ENCODE measurements at regions of chr4 and their contacts with region 1.

Region 1: DNA sequence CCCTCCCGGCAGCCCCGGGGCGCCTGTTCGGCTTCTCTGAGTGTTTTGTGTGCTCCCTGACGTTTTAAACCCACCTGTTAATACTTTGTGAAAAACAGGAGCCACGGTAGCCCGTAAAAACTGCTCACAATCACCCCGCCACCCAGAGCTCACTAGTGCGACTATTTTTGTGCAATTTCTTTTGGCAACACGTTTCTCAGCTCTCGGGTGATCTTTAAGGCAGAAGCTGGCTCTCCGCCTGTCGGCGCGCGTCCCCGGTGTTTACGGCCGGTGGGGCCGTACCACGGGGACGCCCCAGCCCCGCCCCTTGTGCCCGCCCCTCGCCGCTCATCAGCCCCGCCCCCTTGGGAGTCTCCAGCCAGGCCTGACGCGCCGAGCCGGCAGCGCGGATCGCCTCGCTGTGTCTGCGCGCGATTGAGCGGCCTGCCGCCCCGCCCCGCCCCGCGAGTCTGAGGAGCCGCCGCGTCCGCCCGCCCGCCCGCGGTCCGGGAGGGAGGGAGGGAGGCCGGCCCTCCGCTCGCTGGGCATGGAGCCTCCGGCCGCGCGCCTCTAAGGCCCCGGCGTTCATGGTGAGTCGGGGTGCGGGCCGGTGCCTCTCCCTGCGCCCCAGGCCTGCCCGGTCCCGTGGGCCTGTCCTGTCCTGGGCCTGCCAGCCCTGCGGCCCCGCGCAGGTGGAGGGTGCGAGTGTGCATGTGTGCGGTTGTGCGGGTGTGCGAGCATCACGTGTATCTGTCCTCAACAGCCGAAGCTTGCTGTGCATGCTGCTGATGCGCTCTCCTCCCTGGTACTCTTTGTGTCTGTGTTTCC is 56.2 kb upstream of the TADA2B start:
- DNase-seq: peak; percentile 94
- H3K4me3 Mint-ChIP-seq: peak overlapping the region; percentile 100
- H3K27ac Mint-ChIP-seq: peak overlapping the region; percentile 94
- H3K4me1 Mint-ChIP-seq: peaks cover 83% of the 10 kb centered on the region
- H3K27me3 Mint-ChIP-seq: no peaks in the 10 kb centered on the region

Region 2: DNA sequence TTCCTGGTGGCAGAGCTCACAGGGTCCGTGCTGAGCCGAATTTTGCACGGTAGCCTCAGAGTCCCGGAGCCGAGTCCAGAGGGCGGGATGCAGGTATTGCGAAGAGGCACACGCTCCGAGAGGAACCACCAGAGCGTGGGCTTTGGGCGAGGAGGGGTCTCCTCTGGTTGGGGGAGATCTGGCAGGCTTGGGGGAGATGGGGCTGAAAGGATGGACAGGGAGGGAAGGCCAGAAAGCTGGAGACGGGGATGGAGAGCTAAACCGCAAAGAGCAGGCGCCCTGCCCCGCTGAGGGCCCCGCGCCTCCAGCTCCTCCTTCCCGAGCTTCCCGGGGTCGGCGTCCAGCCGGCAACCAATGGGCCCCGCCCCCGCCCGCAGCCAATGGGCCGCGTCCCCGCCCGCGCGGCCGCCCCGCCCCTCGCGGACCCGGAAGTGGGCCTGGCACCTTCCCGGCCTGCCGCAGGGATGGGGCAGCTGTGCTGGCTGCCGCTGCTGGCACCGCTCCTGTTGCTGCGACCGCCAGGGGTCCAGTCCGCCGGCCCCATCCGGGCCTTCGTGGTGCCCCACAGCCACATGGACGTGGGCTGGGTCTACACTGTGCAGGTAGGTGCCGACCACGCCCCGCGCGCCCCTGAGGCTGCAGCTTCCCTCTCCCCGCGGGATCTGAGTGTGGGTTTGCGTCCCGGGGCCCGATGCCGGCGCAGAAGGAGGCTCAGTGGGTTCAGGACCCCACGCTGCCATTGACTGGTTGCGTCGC is 412.1 kb before region 1 on chr4 and contains the start of gene MAN2B2:
- intact Hi-C with region 1: loop called (anchors 2 kb)
- DNase-seq: peak; percentile 83
- H3K4me3 Mint-ChIP-seq: peak within 1 kb of the TSS; percentile 87
- H3K27ac Mint-ChIP-seq: peak within 1 kb of the TSS; percentile 71
- H3K4me1 Mint-ChIP-seq: no peaks in the 10 kb centered on the region
- H3K27me3 Mint-ChIP-seq: peaks cover 5% of the 10 kb centered on the region
- total RNA-seq, gene MAN2B2: 13.9 and 14.0 TPM in 2 replicates

Region 3: GRCh38 chr4:6709230-6710114 is 277.5 kb before region 1 on chr4 and contains the start of gene MRFAP1L1:
- intact Hi-C with region 1: loop called (anchors 2 kb)
- DNase-seq: peak; percentile 95
- H3K4me3 Mint-ChIP-seq: peak within 1 kb of the TSS; percentile 98
- H3K27ac Mint-ChIP-seq: peak within 1 kb of the TSS; percentile 95
- H3K4me1 Mint-ChIP-seq: peaks cover 62% of the 10 kb centered on the region
- H3K27me3 Mint-ChIP-seq: peaks cover 3% of the 10 kb centered on the region
- total RNA-seq, gene MRFAP1L1: 51.7 and 53.9 TPM in 2 replicates

Region 4: GRCh38 chr4:6909073-6909965 is 77.7 kb before region 1 on chr4 and contains the start of gene TBC1D14:
- intact Hi-C with region 1: loop called (anchors 1 kb)
- DNase-seq: peak; percentile 82
- H3K4me3 Mint-ChIP-seq: peak within 1 kb of the TSS; percentile 95
- H3K27ac Mint-ChIP-seq: peak within 1 kb of the TSS; percentile 94
- H3K4me1 Mint-ChIP-seq: peaks cover 66% of the 10 kb centered on the region
- H3K27me3 Mint-ChIP-seq: no peaks in the 10 kb centered on the region
- total RNA-seq, gene TBC1D14: 58.1 and 59.7 TPM in 2 replicates

Region 5: DNA sequence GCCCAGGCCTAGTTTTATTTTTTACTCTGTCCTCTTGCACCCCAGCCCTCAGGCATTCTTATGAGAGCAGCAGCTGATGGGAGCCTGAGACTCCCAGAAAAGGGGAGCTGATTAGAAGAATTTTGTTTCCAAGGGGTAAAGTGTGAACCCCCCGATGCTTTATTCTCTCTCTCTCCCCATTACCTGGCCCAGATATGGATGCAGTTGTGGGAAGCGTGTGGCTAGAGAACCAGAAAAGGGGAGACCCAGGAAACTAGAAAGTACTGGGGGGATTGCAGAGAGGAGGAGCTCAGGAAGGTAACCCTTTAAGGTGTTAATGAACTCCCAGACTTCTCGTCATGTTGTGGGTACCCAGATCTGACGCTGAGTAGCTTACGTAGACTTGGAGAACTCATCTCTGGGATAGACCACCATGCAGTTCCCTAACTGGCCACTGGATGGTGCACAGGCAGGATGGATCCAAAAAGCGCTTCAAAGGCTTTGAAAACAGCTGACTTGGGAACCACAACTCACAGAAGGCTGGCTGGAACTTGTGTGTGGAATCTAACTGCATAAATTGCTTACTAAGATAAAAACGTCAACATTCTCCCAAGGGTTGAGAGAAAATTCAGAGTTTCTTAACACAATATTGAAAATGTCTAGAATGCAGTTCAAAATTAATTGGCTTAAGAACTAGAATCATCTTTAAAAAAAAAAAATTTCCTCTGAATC is 12.7 kb before region 1 on chr4:
- intact Hi-C with region 1: loop called (anchors 1 kb)
- DNase-seq: peak; percentile 70
- H3K4me3 Mint-ChIP-seq: no peak overlapping the region
- H3K27ac Mint-ChIP-seq: no peak overlapping the region
- H3K4me1 Mint-ChIP-seq: peaks cover 13% of the 10 kb centered on the region
- H3K27me3 Mint-ChIP-seq: no peaks in the 10 kb centered on the region

Region 6: GRCh38 chr4:7067452-7068278 is 80.7 kb after region 1 on chr4 and contains the start of gene GRPEL1:
- intact Hi-C with region 1: loop called (anchors 1 kb)
- DNase-seq: peak; percentile 100
- H3K4me3 Mint-ChIP-seq: peak within 1 kb of the TSS; percentile 94
- H3K27ac Mint-ChIP-seq: peak within 1 kb of the TSS; percentile 94
- H3K4me1 Mint-ChIP-seq: peaks cover 50% of the 10 kb centered on the region
- H3K27me3 Mint-ChIP-seq: peaks cover 16% of the 10 kb centered on the region
- total RNA-seq, gene GRPEL1: 106 and 115 TPM in 2 replicates

Region 7: GRCh38 chr4:7094916-7095315 is 107.9 kb after region 1 on chr4:
- intact Hi-C with region 1: no loop called
- DNase-seq: no peak
- H3K4me3 Mint-ChIP-seq: no peak overlapping the region
- H3K27ac Mint-ChIP-seq: no peak overlapping the region
- H3K4me1 Mint-ChIP-seq: no peaks in the 10 kb centered on the region
- H3K27me3 Mint-ChIP-seq: peaks cover 25% of the 10 kb centered on the region

Region 8: DNA sequence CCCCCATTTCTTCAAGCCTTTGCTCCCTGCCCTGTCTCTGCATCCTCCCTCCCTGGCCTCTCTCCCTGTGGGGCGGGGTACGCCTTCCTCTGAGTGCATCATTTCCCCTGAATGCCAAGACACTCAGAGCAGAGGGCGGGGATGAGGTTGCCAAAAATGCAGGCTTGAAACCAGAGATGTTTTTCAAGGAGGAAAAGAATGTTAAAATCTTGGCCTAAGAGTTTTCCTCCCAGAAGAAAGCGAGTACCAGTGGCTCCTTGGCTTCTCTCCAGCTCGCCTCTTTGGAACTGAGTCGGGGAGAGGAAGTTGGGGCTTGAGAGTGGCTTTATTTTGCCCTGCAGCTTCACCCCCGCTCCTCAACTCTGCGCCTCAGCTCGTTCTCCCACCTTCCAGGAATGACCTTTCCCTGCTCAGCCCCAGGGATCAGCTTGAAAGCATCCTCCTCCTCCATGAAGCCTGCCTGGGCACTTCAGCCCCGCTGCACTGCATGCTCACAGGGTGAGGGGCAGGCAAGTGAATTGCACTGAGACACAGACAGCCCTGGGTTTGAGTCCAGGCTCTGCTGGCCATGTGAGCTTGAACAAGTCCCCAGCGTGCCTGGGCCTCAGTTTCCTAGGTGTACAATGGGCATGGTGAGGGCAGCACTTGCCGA is 147.9 kb after region 1 on chr4:
- intact Hi-C with region 1: no loop called
- DNase-seq: no peak
- H3K4me3 Mint-ChIP-seq: no peak overlapping the region
- H3K27ac Mint-ChIP-seq: no peak overlapping the region
- H3K4me1 Mint-ChIP-seq: peaks cover 6% of the 10 kb centered on the region
- H3K27me3 Mint-ChIP-seq: no peaks in the 10 kb centered on the region

Region 9: GRCh38 chr4:7347981-7348380 is 361.0 kb after region 1 on chr4:
- intact Hi-C with region 1: no loop called
- DNase-seq: no peak
- H3K4me3 Mint-ChIP-seq: no peak overlapping the region
- H3K27ac Mint-ChIP-seq: no peak overlapping the region
- H3K4me1 Mint-ChIP-seq: no peaks in the 10 kb centered on the region
- H3K27me3 Mint-ChIP-seq: peaks cover 2% of the 10 kb centered on the region